ENCODE measurements at regions of chr5 and their contacts with region 1.

Region 1: DNA sequence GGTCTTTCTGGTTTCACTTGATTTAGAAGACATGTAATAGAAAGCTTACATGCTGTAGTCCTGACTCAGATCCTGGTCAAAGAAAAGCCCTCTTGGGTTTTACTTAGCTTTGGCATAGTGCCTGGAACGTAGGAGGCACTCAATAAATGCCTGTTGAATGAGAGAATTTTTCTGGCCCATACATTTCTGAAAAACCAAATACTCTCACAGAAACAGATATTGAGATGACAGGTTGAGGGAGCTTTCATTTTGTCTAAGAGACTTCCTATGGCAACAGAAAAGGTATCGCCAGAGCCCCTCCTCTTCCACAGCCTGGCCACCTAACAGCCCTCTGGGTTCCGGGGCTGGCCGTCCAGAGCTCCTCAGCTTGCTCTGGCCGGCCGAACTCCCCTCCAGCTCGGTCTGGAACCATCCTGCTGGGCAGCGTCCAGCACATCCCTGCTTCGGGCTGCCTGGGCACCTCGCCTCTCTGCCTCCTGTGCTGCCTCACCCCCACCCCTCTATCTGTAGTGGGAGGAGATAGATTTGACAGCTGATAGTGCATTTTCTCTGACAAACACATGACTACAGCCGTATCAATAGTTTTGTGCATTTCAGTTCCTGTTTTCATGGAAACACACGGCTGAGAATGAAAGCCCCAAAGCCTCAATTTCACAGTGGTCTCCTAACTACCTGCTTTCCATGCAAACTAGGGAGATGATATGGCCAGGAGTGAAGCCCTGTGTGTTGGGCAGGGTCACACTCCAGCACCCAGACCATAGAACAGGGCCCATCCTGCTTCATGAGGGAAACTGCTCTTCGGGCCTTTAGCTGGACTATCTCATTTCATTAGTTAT is 1.1 kb downstream of the IL4 start:
- DNase-seq: peak; percentile 93
- ATAC-seq: peak; percentile 88
- H3K4me3 ChIP-seq: peak overlapping the region; percentile 29; the same call in 1 of the 2 replicates
- H3K27ac ChIP-seq: peak overlapping the region; percentile 75
- H3K4me1 ChIP-seq: peaks cover 33% of the 10 kb centered on the region
- H3K27me3 ChIP-seq: no peaks in the 10 kb centered on the region
- CTCF ChIP-seq: no peak
- EP300 ChIP-seq: peak; percentile 92 to 96
- POLR2A ChIP-seq: peak; percentile 33; the same call in 1 of the 2 replicates
- RAD21 ChIP-seq: no peak

Region 2: GRCh38 chr5:132591145-132591544 is 83.7 kb before region 1 on chr5:
- CTCF ChIA-PET with region 1: no interaction called
- POLR2A ChIA-PET with region 1: no interaction called
- RAD21 ChIA-PET with region 1: no interaction called
- SMC1A ChIA-PET with region 1: no interaction called
- in situ Hi-C with region 1: no loop called
- intact Hi-C with region 1: no loop called
- DNase-seq: no peak
- ATAC-seq: peak; percentile 54; the same call in 2 of the 3 replicates
- H3K4me3 ChIP-seq: no peak overlapping the region
- H3K27ac ChIP-seq: no peak overlapping the region
- H3K4me1 ChIP-seq: no peaks in the 10 kb centered on the region
- H3K27me3 ChIP-seq: no peaks in the 10 kb centered on the region
- CTCF ChIP-seq: peak in 2 of 3 experiments; percentile 31 to 59; a peak in 3 of 6 replicates
- EP300 ChIP-seq: no peak
- POLR2A ChIP-seq: no peak
- RAD21 ChIP-seq: peak; percentile 69

Region 3: GRCh38 chr5:132629230-132629944 is 45.5 kb before region 1 on chr5:
- CTCF ChIA-PET with region 1: interaction called, 3 read pairs
- POLR2A ChIA-PET with region 1: interaction called, 4 read pairs
- RAD21 ChIA-PET with region 1: interaction called, 3 read pairs
- SMC1A ChIA-PET with region 1: interaction called, 11 read pairs
- in situ Hi-C with region 1: no loop called
- intact Hi-C with region 1: no loop called
- DNase-seq: no peak
- ATAC-seq: peak; percentile 86
- H3K4me3 ChIP-seq: no peak overlapping the region; the same call in 1 of the 2 replicates
- H3K27ac ChIP-seq: peak overlapping the region; percentile 70
- H3K4me1 ChIP-seq: peaks cover 11% of the 10 kb centered on the region; the same call in 1 of the 2 replicates
- H3K27me3 ChIP-seq: no peaks in the 10 kb centered on the region
- CTCF ChIP-seq: no peak
- EP300 ChIP-seq: no peak
- POLR2A ChIP-seq: no peak
- RAD21 ChIP-seq: no peak

Region 4: GRCh38 chr5:132688536-132689339 is 13.8 kb after region 1 on chr5:
- CTCF ChIA-PET with region 1: interaction called, 20 read pairs
- POLR2A ChIA-PET with region 1: interaction called, 79 read pairs
- RAD21 ChIA-PET with region 1: interaction called, 52 read pairs
- SMC1A ChIA-PET with region 1: interaction called, 116 read pairs
- in situ Hi-C with region 1: no loop called
- intact Hi-C with region 1: no loop called
- DNase-seq: no peak
- ATAC-seq: peak; percentile 34
- H3K4me3 ChIP-seq: no peak overlapping the region
- H3K27ac ChIP-seq: no peak overlapping the region
- H3K4me1 ChIP-seq: peaks cover 18% of the 10 kb centered on the region; the same call in 1 of the 2 replicates
- H3K27me3 ChIP-seq: no peaks in the 10 kb centered on the region
- CTCF ChIP-seq: no peak
- EP300 ChIP-seq: no peak
- POLR2A ChIP-seq: no peak
- RAD21 ChIP-seq: no peak

Region 5: DNA sequence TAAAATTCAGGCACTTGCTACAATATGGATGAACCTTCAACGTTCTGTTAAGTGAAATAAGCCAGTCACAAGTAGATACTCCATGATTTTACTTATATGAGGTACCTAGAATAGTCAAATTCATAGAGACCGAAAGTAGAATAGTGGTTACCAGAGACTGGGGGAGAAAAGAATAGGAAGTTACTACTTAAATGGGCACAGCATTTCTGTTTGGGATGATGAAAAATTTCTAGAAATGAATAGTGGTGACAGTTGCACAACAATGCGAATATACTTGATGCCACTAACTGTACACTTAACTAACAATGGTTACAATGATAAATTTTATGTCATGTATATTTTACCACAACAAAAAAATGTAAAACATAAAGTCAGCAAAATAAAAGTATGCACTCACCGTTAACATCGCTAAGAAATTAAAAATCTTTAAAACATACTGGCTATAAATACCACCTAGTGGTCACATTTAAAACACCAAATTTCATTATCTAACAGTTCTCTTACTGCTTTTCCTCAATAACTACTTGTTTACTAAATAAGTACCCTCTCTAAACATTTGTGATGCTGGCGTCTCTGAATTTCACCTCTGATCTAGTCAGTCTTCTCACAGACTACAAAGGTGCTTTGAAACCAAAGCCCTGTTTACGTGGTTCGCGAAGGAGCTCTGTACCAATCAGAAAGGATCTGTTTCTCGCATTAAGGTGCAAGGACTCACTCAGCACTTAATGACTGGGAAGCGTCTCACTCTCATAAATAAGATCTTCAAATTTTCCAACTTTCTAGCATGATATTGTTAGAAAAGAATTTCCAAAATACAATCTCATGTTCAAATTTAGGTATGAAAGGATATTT is 39.8 kb after region 1 on chr5:
- CTCF ChIA-PET with region 1: interaction called, 7 read pairs
- POLR2A ChIA-PET with region 1: interaction called, 4 read pairs
- RAD21 ChIA-PET with region 1: interaction called, 8 read pairs
- SMC1A ChIA-PET with region 1: interaction called, 33 read pairs
- in situ Hi-C with region 1: no loop called
- intact Hi-C with region 1: no loop called
- DNase-seq: no peak
- ATAC-seq: peak; percentile 64
- H3K4me3 ChIP-seq: no peak overlapping the region
- H3K27ac ChIP-seq: no peak overlapping the region
- H3K4me1 ChIP-seq: no peaks in the 10 kb centered on the region
- H3K27me3 ChIP-seq: no peaks in the 10 kb centered on the region
- CTCF ChIP-seq: peak in 1 of 3 experiments; percentile 28; a peak in 2 of 6 replicates
- EP300 ChIP-seq: no peak
- POLR2A ChIP-seq: no peak
- RAD21 ChIP-seq: 0 out of 2 replicates have a peak, but pooled peaks have one; percentile 8

Region 6: GRCh38 chr5:132753135-132753987 is 78.5 kb after region 1 on chr5:
- CTCF ChIA-PET with region 1: interaction called, 6 read pairs
- POLR2A ChIA-PET with region 1: interaction called, 21 read pairs
- RAD21 ChIA-PET with region 1: interaction called, 26 read pairs
- SMC1A ChIA-PET with region 1: interaction called, 11 read pairs
- in situ Hi-C with region 1: no loop called
- intact Hi-C with region 1: no loop called
- DNase-seq: no peak
- ATAC-seq: peak; percentile 42
- H3K4me3 ChIP-seq: no peak overlapping the region
- H3K27ac ChIP-seq: no peak overlapping the region
- H3K4me1 ChIP-seq: peaks cover 25% of the 10 kb centered on the region
- H3K27me3 ChIP-seq: no peaks in the 10 kb centered on the region
- CTCF ChIP-seq: peak; percentile 6 to 44 (median 15); a peak in 3 of 6 replicates
- EP300 ChIP-seq: no peak
- POLR2A ChIP-seq: no peak
- RAD21 ChIP-seq: peak; percentile 27; the same call in 1 of the 2 replicates

Region 7: DNA sequence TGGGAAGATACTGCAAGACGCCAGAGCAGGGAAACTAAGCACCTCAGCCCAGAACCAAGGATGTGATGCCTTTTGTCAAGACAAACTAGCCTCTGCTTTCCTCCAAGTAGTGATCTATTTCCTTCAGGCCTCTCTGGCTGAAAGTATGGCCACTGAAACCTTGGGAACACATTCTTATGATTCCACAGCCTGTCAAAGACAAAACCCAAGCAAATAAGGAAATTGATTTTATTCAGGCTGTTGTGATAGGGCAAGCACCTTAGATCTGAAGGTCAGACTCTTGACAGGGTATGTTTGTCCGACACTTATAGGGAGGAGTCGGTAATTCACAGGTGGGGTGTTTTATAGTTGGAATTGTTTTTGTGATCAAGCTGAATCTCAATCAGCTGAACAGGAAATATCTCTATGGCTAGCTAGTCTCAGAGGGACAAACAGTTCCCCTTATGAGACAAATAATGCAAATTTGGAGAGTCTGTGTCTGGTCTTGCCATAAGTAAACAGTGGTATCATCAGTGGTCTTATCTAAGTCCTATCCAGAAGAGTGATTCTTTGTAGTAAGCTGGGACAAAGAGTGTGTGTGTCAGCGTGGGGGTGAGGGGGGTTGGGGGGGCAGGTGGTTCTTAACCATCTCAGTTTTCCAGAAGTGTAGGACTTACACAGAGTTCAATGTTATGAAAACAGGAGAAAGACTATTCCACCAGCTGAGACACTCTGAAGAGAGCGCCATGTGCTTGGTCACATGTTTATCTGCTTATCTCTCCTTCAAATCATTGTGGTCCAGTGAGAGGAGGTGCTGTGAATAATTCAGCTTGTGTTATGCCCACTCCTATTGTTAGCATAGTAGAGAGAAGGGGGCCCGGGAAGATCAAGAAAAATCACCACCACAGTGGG is 358.2 kb after region 1 on chr5:
- CTCF ChIA-PET with region 1: no interaction called
- POLR2A ChIA-PET with region 1: no interaction called
- RAD21 ChIA-PET with region 1: no interaction called
- SMC1A ChIA-PET with region 1: no interaction called
- in situ Hi-C with region 1: no loop called
- intact Hi-C with region 1: no loop called
- DNase-seq: no peak
- ATAC-seq: peak; percentile 87
- H3K4me3 ChIP-seq: no peak overlapping the region
- H3K27ac ChIP-seq: no peak overlapping the region
- H3K4me1 ChIP-seq: peaks cover 11% of the 10 kb centered on the region
- H3K27me3 ChIP-seq: no peaks in the 10 kb centered on the region
- CTCF ChIP-seq: no peak
- EP300 ChIP-seq: no peak
- POLR2A ChIP-seq: no peak
- RAD21 ChIP-seq: no peak

Measured in GM12878 (cell line).